ENCODE measurements at regions of chr4 and their contacts with region 1.

Region 1: DNA sequence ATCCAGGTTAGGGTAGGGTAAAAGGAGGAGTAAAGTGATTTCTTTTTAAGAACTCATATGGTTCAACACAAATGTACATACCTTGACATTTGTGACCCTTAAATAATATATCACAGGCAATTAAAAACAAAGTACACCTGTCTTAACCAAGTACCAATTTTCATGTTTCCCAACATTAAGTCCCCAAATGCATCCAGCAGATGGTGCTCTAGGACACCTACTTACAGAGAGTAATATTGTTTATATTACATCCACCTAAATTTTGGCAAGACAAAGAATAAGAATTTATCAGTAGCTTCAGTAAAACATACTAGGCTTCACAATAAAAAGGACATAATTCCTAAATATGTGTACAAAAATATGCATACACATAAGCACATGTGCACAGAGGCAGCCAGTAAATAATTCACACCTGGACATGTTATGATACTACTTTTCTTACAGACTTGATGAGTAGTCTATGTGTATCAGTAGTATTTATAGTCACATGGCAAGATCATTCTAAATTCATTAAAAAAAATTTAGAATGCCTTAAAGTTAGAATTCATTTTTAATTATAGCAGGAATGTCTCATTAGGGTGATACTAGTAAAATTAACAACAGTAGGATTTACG is 219.7 kb downstream of the DCLK2 start:
- H3K4me3 ChIP-seq: no peak overlapping the region
- H3K27ac ChIP-seq: no peak overlapping the region
- H3K4me1 ChIP-seq: no peaks in the 10 kb centered on the region
- CTCF ChIP-seq: peak; percentile 27; the same call in 1 of the 2 replicates

Region 2: GRCh38 chr4:150278206-150278605 is 19.8 kb before region 1 on chr4:
- CTCF ChIA-PET with region 1: no interaction called
- POLR2A ChIA-PET with region 1: no interaction called
- H3K4me3 ChIP-seq: no peak overlapping the region
- H3K27ac ChIP-seq: no peak overlapping the region
- H3K4me1 ChIP-seq: 0 out of 2 replicates have a peak, but pooled peaks cover 2% of the 10 kb centered on the region
- CTCF ChIP-seq: no peak

Region 3: GRCh38 chr4:150366487-150366999 is 68.6 kb after region 1 on chr4:
- CTCF ChIA-PET with region 1: no interaction called
- POLR2A ChIA-PET with region 1: no interaction called
- H3K4me3 ChIP-seq: no peak overlapping the region
- H3K27ac ChIP-seq: no peak overlapping the region
- H3K4me1 ChIP-seq: no peaks in the 10 kb centered on the region
- CTCF ChIP-seq: no peak

Region 4: GRCh38 chr4:150867148-150867547 is 569.2 kb after region 1 on chr4:
- CTCF ChIA-PET with region 1: interaction called, 20 read pairs
- POLR2A ChIA-PET with region 1: no interaction called
- H3K4me3 ChIP-seq: no peak overlapping the region
- H3K27ac ChIP-seq: no peak overlapping the region
- H3K4me1 ChIP-seq: no peaks in the 10 kb centered on the region
- CTCF ChIP-seq: no peak